ENCODE measurements at regions of chr18 and their contacts with region 1.

Region 1: GRCh38 chr18:2547477-2548087 is 23.7 kb downstream of the METTL4 start:
- DNase-seq: no peak
- ATAC-seq: peak in 1 of 4 donors; percentile 59
- H3K4me3 ChIP-seq: no peak overlapping the region
- H3K27ac ChIP-seq: no peak overlapping the region
- H3K4me1 ChIP-seq: no peaks in the 10 kb centered on the region
- H3K27me3 ChIP-seq: no peaks in the 10 kb centered on the region
- CTCF ChIP-seq: peak; percentile 67

Region 2: GRCh38 chr18:864872-865273 is 1682.7 kb before region 1 on chr18:
- intact Hi-C with region 1: loop called in 1 of 2 experiments (anchors 10 kb)
- DNase-seq: peak; percentile 47 to 75
- ATAC-seq: peak; percentile 44 to 62 (median 57)
- H3K4me3 ChIP-seq: no peak overlapping the region
- H3K27ac ChIP-seq: no peak overlapping the region
- H3K4me1 ChIP-seq: no peaks in the 10 kb centered on the region
- H3K27me3 ChIP-seq: peaks cover 0 to 13% (median 0%) of the 10 kb centered on the region in 3 donors
- CTCF ChIP-seq: peak; percentile 83

Region 3: DNA sequence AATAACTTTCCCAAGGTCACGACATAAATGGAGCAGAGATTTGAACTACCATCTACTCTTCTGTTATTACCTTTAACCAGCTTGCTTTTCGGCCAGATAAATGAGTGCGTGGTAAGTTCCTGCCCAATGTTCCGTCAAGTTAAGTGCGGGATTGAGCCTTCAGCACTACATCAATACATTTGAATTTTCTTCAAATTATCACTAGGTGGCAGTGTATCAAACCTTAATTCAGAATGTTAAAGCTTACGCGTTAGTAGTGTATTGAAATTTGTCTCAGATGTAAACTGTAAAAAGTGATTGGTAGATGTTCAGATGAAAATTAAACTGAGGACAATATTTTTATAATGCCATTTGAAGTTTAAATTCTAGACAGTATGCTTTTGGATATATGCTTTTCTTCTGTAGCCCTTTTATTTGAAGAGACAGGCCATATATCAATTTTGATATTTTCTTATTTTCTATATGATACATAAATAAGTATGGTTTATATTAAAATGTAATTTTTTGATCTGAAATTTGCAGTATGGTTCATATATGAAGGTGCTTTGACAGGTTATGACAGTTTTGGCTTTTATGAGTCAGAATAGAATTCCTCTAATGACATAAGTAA is 961.6 kb before region 1 on chr18:
- intact Hi-C with region 1: loop called (anchors 5 to 10 kb)
- DNase-seq: no peak
- ATAC-seq: no peak
- H3K4me3 ChIP-seq: no peak overlapping the region
- H3K27ac ChIP-seq: no peak overlapping the region
- H3K4me1 ChIP-seq: no peaks in the 10 kb centered on the region
- H3K27me3 ChIP-seq: no peaks in the 10 kb centered on the region
- CTCF ChIP-seq: peak; percentile 33

Region 4: DNA sequence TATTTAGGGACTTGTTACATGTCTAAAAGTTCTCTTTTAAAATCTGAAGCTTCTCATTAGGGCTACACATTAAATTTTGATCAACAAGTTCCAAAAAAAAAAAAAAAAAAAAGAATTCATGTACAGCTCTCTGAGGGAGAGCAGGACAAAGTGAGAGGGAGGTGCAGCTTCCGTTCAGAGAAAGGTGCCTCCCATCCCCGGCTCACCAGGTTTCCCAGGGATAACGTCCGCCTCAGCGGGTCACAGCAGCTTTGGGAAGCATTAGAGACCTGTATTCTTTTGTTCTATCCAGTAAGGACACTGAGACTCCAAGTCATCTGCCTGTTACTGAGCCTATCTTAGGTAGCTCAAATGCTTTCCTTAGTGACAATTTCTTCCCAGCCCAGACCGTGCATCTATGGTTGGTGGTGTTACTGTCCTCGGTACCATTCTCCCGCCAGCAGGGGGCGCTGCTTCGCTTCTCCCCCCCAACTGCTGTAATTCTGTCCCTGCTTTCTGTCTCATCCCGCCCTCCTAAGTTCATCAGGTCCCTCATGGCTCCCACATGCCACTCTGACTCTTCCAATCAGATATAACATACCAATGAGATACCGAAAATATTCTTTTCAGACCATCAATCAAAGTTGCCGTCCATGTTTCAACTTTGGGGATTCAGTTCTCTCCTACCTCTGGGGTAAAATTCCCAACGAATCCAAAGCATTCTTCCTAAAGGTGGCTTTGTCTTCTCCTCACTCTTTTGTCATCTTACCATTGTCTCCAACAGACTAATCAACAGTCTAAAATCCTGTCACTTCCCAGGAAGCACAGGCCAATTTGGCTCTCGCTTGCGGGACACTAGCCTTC is 442.7 kb before region 1 on chr18:
- intact Hi-C with region 1: loop called in 1 of 2 experiments (anchors 10 kb)
- DNase-seq: peak in 1 of 2 donors; percentile 21
- ATAC-seq: no peak
- H3K4me3 ChIP-seq: no peak overlapping the region
- H3K27ac ChIP-seq: no peak overlapping the region
- H3K4me1 ChIP-seq: no peaks in the 10 kb centered on the region
- H3K27me3 ChIP-seq: no peaks in the 10 kb centered on the region
- CTCF ChIP-seq: peak; percentile 38

Region 5: GRCh38 chr18:2337552-2338141 is 209.9 kb before region 1 on chr18:
- intact Hi-C with region 1: loop called in 1 of 2 experiments (anchors 5 kb)
- DNase-seq: no peak
- ATAC-seq: no peak
- H3K4me3 ChIP-seq: no peak overlapping the region
- H3K27ac ChIP-seq: no peak overlapping the region
- H3K4me1 ChIP-seq: no peaks in the 10 kb centered on the region
- H3K27me3 ChIP-seq: no peaks in the 10 kb centered on the region
- CTCF ChIP-seq: peak; percentile 44

Measured in psoas muscle (tissue), 8 donors.